ENCODE measurements at regions of chr7 and their contacts with region 1.

Region 1: DNA sequence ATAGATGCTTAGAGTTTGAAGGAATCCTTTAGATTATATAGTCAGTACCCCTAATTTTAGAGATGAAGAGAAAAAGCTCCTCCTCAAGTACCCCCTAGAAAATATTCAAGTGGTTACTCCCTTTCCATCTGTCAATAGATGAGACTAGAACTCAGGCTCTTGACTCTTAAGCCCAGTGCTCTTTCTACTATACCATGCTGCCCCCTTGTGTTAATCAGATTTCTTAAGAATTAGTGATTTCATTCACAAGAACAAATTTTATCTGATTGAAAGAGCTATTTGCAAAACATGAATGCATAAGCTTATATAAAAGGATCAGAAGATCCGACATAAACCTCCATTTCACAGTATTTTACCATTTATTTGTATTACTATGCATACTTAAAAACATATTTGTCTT is 179.3 kb downstream of the TFEC start:
- DNase-seq: peak; percentile 5
- CTCF ChIP-seq: peak; percentile 47

Region 2: DNA sequence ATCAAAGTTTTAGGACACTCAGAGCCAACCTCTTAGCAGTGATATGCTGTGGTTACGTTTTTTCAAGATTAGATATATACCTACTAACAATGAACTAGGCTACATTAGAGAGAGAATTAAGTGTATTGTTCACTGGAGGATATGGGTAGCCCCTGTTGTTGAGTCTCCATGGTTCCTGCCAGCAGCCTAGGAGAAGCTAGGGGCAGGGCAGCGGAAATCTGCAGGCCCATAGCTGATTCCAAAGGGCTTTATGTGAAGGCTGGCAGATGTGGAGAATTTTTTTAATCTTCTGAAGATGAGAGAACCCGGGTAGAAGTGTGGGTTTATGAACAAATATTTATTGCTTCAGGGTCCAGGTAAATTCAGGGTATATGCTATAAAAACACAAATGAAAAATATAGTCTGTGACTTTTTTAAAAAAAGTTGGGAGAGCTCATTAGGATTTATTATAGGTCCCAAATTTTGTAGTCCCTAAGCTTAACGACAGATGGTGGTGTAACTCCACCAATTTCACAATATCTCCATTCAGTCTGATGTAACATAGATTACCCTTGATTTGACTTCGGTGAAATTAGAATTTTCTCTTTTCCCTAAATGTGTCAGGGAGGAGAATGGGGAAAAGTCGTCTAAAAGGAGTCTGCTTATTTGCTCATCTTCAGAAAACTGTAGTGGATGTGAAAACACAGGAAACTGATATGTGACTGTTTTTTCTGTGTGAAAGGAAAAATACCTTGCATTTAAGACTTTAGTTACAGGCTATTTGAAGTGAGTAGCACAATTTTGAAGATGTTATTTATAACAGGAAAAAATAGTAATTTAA is 1769.5 kb before region 1 on chr7:
- CTCF ChIA-PET with region 1: interaction called, 20 read pairs
- POLR2A ChIA-PET with region 1: no interaction called
- DNase-seq: peak; percentile 25
- CTCF ChIP-seq: peak; percentile 38

Region 3: GRCh38 chr7:115840702-115841101 is 10.6 kb before region 1 on chr7:
- CTCF ChIA-PET with region 1: interaction called, 18 read pairs
- POLR2A ChIA-PET with region 1: no interaction called
- DNase-seq: no peak
- CTCF ChIP-seq: no peak